PC-3 (cell line): ENCODE measurements at regions of chr14 and their contacts with region 1.

Region 1: DNA sequence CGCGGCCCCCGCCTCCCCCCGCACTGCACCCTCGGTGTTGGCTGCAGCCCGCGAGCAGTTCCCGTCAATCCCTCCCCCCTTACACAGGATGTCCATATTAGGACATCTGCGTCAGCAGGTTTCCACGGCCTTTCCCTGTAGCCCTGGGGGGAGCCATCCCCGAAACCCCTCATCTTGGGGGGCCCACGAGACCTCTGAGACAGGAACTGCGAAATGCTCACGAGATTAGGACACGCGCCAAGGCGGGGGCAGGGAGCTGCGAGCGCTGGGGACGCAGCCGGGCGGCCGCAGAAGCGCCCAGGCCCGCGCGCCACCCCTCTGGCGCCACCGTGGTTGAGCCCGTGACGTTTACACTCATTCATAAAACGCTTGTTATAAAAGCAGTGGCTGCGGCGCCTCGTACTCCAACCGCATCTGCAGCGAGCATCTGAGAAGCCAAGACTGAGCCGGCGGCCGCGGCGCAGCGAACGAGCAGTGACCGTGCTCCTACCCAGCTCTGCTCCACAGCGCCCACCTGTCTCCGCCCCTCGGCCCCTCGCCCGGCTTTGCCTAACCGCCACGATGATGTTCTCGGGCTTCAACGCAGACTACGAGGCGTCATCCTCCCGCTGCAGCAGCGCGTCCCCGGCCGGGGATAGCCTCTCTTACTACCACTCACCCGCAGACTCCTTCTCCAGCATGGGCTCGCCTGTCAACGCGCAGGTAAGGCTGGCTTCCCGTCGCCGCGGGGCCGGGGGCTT is at the start of gene FOS:
- DNase-seq: peak; percentile 86
- ATAC-seq: peak; percentile 72
- H3K4me3 ChIP-seq: peak within 1 kb of the TSS; percentile 93
- H3K27ac ChIP-seq: peak within 1 kb of the TSS; percentile 79
- H3K4me1 ChIP-seq: peaks cover 16% of the 10 kb centered on the region; the same call in 1 of the 2 replicates
- H3K27me3 ChIP-seq: no peaks in the 10 kb centered on the region; the same call in 1 of the 2 replicates
- CTCF ChIP-seq: no peak
- total RNA-seq, gene FOS: 99.2 and 103 TPM in 2 replicates

Region 2: GRCh38 chr14:75176142-75176820 is 102.3 kb before region 1 on chr14 and contains the start of gene TMED10:
- CTCF ChIA-PET with region 1: no interaction called
- POLR2A ChIA-PET with region 1: no interaction called
- intact Hi-C with region 1: loop called (anchors 5 kb)
- DNase-seq: no peak
- ATAC-seq: peak; percentile 83
- H3K4me3 ChIP-seq: peak within 1 kb of the TSS; percentile 100
- H3K27ac ChIP-seq: peak within 1 kb of the TSS; percentile 71
- H3K4me1 ChIP-seq: peaks cover 9% of the 10 kb centered on the region; the same call in 1 of the 2 replicates
- H3K27me3 ChIP-seq: no peaks in the 10 kb centered on the region
- CTCF ChIP-seq: no peak
- total RNA-seq, gene TMED10: 246 and 253 TPM in 2 replicates